ENCODE measurements at regions of chr15 and their contacts with region 1.

Region 1: DNA sequence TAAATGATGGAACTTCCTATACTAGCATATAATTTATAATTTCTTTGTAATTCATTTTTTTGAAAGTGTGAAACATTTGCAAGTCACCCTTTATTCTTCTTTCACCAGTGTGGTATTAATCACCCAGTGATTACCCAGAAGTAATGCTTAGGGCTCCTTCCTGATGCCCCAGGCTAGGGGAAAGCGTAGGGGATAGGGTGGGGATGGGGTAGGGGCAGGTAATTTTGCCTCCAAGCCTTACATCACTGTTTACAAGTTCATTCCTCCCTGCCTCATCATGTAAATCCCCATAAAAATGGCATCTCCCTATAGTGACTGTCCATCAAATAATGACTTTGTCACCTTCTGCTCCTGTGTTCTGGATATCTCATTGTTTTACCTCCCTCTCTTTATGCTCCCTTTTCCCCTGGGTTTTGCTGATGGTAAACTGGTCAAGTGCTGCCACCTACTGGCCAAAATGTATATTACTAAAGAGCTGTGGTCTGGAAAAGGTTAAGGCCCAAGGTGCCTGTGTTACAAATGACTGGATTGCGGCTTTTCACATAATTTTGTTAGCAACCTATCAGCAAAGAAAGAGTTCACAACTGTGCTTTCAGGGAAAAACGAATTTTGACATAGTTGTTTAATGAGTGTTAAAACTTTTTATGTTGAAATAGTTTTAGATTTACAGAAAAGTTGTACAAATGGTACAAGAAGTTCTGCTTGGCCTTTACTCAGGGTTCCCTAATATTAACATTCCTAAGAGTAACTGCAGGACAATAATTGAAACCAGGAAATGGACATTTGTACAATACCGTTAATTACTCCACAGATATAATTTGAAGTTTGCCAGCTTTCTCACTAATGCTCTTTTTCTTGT is 54.7 kb downstream of the ONECUT1 start:
- DNase-seq: peak; percentile 79
- ATAC-seq: peak; percentile 92
- H3K4me3 Mint-ChIP-seq: no peak overlapping the region
- H3K27ac Mint-ChIP-seq: no peak overlapping the region
- H3K4me1 Mint-ChIP-seq: peaks cover 27% of the 10 kb centered on the region
- H3K27me3 Mint-ChIP-seq: peaks cover 16% of the 10 kb centered on the region

Region 2: GRCh38 chr15:52261498-52262242 is 473.8 kb before region 1 on chr15:
- CTCF ChIA-PET with region 1: interaction called, 131 read pairs
- DNase-seq: peak; percentile 91
- ATAC-seq: peak; percentile 100
- H3K4me3 Mint-ChIP-seq: peak overlapping the region; percentile 31
- H3K27ac Mint-ChIP-seq: peak overlapping the region; percentile 92
- H3K4me1 Mint-ChIP-seq: peaks cover 43% of the 10 kb centered on the region
- H3K27me3 Mint-ChIP-seq: no peaks in the 10 kb centered on the region

Region 3: DNA sequence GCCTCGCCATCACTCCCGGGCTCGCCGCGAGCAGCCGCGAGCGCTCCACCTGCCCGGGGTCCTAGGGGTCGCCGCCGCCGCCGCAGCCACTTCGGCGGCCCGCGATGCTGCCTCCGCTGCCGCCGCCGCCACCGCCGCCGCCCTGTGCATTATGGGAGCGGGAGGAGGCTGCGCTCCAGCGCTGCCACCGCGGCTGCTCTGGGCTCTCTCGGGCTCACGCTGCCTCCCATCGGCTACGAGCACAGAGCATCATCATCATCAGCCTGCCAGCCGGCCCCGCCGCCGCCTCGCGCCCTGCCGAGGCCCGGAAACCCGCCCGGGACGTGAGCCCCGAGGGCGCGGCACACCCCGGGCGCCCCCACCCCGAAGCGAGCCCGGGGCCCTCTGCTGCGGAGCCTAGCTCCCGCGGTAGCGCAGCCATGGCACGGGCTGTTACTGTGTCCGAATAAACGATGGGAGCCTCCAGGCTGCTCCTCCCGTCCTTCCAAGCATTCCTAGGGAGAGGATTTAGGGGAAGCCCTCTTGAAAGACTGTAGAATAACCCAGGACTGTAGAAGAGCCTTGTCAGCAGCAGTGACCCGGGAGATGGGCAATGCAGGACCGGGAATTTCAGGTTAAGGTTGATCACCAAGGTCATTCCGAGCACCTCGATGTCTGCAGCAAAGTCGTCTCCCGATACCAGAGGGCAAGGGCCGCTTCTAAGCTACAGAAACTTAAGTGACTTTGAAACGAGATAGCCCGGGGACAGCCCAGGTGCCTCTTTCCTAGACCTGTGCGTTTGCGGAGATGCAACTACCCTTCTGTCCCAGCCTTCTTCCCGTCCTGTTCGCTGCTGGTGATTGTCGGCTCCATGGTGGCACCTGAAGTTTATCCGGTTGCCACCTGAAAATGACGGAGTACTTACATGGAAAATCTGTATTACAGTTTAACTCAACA is 206.2 kb before region 1 on chr15:
- CTCF ChIA-PET with region 1: interaction called, 13 read pairs
- DNase-seq: peak; percentile 87
- ATAC-seq: peak; percentile 88
- H3K4me3 Mint-ChIP-seq: peak overlapping the region; percentile 62
- H3K27ac Mint-ChIP-seq: peak overlapping the region; percentile 72
- H3K4me1 Mint-ChIP-seq: peaks cover 30% of the 10 kb centered on the region
- H3K27me3 Mint-ChIP-seq: no peaks in the 10 kb centered on the region

Region 4: GRCh38 chr15:52546031-52546751 is 189.3 kb before region 1 on chr15:
- CTCF ChIA-PET with region 1: no interaction called
- DNase-seq: peak; percentile 73
- ATAC-seq: peak; percentile 85
- H3K4me3 Mint-ChIP-seq: no peak overlapping the region
- H3K27ac Mint-ChIP-seq: peak overlapping the region; percentile 71
- H3K4me1 Mint-ChIP-seq: peaks cover 21% of the 10 kb centered on the region
- H3K27me3 Mint-ChIP-seq: no peaks in the 10 kb centered on the region

Region 5: GRCh38 chr15:53072025-53072471 is 336.6 kb after region 1 on chr15:
- CTCF ChIA-PET with region 1: no interaction called
- DNase-seq: peak; percentile 41
- ATAC-seq: no peak
- H3K4me3 Mint-ChIP-seq: no peak overlapping the region
- H3K27ac Mint-ChIP-seq: no peak overlapping the region
- H3K4me1 Mint-ChIP-seq: no peaks in the 10 kb centered on the region
- H3K27me3 Mint-ChIP-seq: no peaks in the 10 kb centered on the region